ENCODE measurements at regions of chr12 and their contacts with region 1.

Region 1: GRCh38 chr12:75334384-75335030 is at the start of gene GLIPR1L1:
- DNase-seq: peak; percentile 73
- H3K4me3 ChIP-seq: no peak within 1 kb of the TSS
- H3K27ac ChIP-seq: no peak within 1 kb of the TSS
- H3K4me1 ChIP-seq: peaks cover 4% of the 10 kb centered on the region
- CTCF ChIP-seq: peak; percentile 88
- total RNA-seq, gene GLIPR1L1: not detected in 2 replicates

Region 2: DNA sequence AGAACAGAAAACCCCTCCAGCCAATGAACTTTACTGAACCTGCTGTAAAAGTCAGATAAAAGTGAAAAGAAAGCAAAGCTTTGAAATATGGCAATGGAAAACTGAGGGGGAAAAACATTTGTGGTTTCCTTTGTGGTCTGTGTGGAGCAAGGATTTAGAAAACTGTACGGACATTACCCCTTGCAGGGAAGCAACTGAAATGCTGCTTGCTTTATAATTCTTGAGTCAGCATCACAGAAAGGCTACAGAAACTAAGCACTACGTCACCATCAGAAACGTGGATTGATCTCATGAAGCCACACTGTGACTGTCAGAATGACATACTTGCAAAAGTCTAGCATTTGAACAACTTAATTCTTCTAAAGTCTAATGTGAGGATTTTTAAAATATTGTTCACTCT is 122.4 kb before region 1 on chr12:
- CTCF ChIA-PET with region 1: no interaction called
- POLR2A ChIA-PET with region 1: no interaction called
- intact Hi-C with region 1: no loop called
- DNase-seq: no peak
- H3K4me3 ChIP-seq: no peak overlapping the region
- H3K27ac ChIP-seq: no peak overlapping the region
- H3K4me1 ChIP-seq: no peaks in the 10 kb centered on the region
- CTCF ChIP-seq: no peak

Region 3: GRCh38 chr12:75489613-75490210 is 155.2 kb after region 1 on chr12:
- CTCF ChIA-PET with region 1: no interaction called
- POLR2A ChIA-PET with region 1: no interaction called
- intact Hi-C with region 1: loop called (anchors 1 kb)
- DNase-seq: no peak
- H3K4me3 ChIP-seq: no peak overlapping the region
- H3K27ac ChIP-seq: no peak overlapping the region
- H3K4me1 ChIP-seq: no peaks in the 10 kb centered on the region
- CTCF ChIP-seq: no peak

Region 4: GRCh38 chr12:75505706-75506312 is 171.3 kb after region 1 on chr12:
- CTCF ChIA-PET with region 1: no interaction called
- POLR2A ChIA-PET with region 1: interaction called, 3 read pairs
- intact Hi-C with region 1: loop called (anchors 5 kb)
- DNase-seq: peak; percentile 51
- H3K4me3 ChIP-seq: no peak overlapping the region
- H3K27ac ChIP-seq: no peak overlapping the region
- H3K4me1 ChIP-seq: peaks cover 15% of the 10 kb centered on the region
- CTCF ChIP-seq: peak; percentile 91